ENCODE measurements at regions of chr18 and their contacts with region 1.

Region 1: GRCh38 chr18:23131693-23132319 is 3.5 kb upstream of the CABLES1 start:
- DNase-seq: peak; percentile 69
- ATAC-seq: no peak
- H3K4me3 Mint-ChIP-seq: no peak overlapping the region
- H3K27ac Mint-ChIP-seq: no peak overlapping the region
- H3K4me1 Mint-ChIP-seq: peaks cover 12% of the 10 kb centered on the region
- H3K27me3 Mint-ChIP-seq: peaks cover 17% of the 10 kb centered on the region

Region 2: GRCh38 chr18:23032030-23032582 is 99.7 kb before region 1 on chr18:
- CTCF ChIA-PET with region 1: interaction called, 3 read pairs
- POLR2A ChIA-PET with region 1: no interaction called
- intact Hi-C with region 1: loop called in 1 of 2 experiments (anchors 5 kb)
- DNase-seq: no peak
- ATAC-seq: no peak
- H3K4me3 Mint-ChIP-seq: no peak overlapping the region
- H3K27ac Mint-ChIP-seq: no peak overlapping the region
- H3K4me1 Mint-ChIP-seq: no peaks in the 10 kb centered on the region
- H3K27me3 Mint-ChIP-seq: no peaks in the 10 kb centered on the region

Region 3: DNA sequence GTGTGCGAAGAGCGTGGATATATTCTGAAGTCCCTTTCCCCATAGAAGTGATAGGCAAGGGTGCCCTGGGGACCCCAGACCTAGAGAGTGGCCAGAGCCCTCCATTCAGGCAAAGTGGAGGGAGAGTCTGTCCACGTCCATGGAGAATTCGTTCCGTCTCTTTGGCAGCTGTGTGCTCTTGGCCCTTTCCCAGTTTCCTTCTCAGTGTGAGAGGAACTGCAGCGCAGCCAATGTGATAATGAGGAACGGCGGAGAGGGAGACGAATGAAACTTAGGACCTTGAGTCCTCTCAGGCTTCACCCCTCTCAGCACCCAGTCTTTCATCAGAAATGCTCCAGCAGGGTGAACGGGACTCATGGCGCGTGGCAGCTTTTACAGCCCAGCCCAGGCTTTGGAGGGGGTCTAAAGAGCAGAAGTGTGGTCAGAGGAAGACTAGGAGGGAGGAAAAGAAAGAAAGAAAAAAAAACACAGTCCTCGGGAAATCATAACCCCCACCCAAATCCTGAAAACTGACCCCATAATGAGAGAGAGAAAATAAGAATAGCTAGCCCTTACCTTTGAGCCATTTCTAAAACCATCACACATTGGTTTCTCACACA is 226.3 kb after region 1 on chr18:
- CTCF ChIA-PET with region 1: interaction called, 18 read pairs
- POLR2A ChIA-PET with region 1: no interaction called
- intact Hi-C with region 1: loop called (anchors 1 kb)
- DNase-seq: no peak
- ATAC-seq: no peak
- H3K4me3 Mint-ChIP-seq: no peak overlapping the region
- H3K27ac Mint-ChIP-seq: no peak overlapping the region
- H3K4me1 Mint-ChIP-seq: peaks cover 24% of the 10 kb centered on the region
- H3K27me3 Mint-ChIP-seq: no peaks in the 10 kb centered on the region

Region 4: GRCh38 chr18:23412351-23412964 is 280.7 kb after region 1 on chr18:
- CTCF ChIA-PET with region 1: interaction called, 40 read pairs
- POLR2A ChIA-PET with region 1: no interaction called
- intact Hi-C with region 1: loop called (anchors 1 kb)
- DNase-seq: no peak
- ATAC-seq: no peak
- H3K4me3 Mint-ChIP-seq: no peak overlapping the region
- H3K27ac Mint-ChIP-seq: no peak overlapping the region
- H3K4me1 Mint-ChIP-seq: no peaks in the 10 kb centered on the region
- H3K27me3 Mint-ChIP-seq: no peaks in the 10 kb centered on the region

Measured in activated CD4-positive, alpha-beta T cell treated with anti-CD3 and anti-CD28 coated beads for 36 hours (primary cell).